ENCODE measurements at regions of chr14 and their contacts with region 1.

Region 1: GRCh38 chr14:93234798-93235197 is 27.7 kb downstream of the UBR7 start:
- DNase-seq: no peak
- H3K4me3 ChIP-seq: no peak overlapping the region
- H3K27ac ChIP-seq: no peak overlapping the region
- H3K4me1 ChIP-seq: no peaks in the 10 kb centered on the region
- CTCF ChIP-seq: no peak

Region 2: DNA sequence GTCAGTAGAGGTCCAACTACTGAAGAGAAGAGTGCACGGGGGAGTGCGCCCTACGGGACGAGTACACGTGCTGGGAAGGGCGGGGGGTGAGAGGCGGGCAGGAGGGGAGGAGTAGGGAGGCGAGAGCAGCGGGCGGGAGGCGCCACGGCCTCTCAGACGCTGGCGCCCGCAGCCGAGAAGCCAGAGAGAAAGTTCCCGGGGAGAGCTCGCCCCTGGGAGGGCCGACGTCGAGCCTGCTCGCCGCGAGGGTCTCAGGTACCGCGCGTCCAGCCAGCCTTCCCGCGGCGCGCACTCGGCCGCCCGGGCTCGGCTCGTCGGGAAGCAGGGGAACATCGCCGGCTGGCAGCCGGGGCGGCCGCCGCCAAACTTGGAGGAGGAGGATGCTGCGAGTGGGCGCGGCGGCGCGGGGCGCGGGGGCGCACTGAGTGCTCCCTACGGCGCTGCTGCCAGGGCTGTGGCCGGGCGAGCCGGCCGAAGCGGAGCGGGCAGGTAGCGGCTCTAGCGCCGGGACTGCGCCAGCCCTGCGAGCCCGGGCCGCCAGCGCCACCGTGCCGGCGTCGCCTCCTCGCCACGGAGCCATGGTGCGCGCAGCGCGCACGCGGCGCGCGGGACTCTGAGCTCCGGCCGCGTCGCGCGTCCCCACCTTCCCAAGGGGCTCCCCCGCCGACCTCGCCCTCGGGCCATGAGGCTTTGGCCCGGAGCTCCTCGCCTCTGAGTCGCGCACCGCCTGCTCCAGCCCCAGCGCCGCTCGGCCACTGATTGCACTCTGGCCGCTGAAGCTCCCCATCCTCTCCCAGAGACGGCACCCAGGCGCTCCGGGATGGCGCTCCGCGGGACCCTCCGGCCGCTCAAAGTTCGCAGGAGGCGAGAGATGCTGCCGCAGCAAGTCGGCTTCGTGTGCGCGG is 911.5 kb before region 1 on chr14 and contains the start of gene SLC24A4:
- CTCF ChIA-PET with region 1: no interaction called
- POLR2A ChIA-PET with region 1: no interaction called
- intact Hi-C with region 1: no loop called
- DNase-seq: no peak
- H3K4me3 ChIP-seq: no peak within 1 kb of the TSS
- H3K27ac ChIP-seq: no peak within 1 kb of the TSS
- H3K4me1 ChIP-seq: no peaks in the 10 kb centered on the region
- CTCF ChIP-seq: no peak
- total RNA-seq, gene SLC24A4: not detected in 2 replicates

Region 3: DNA sequence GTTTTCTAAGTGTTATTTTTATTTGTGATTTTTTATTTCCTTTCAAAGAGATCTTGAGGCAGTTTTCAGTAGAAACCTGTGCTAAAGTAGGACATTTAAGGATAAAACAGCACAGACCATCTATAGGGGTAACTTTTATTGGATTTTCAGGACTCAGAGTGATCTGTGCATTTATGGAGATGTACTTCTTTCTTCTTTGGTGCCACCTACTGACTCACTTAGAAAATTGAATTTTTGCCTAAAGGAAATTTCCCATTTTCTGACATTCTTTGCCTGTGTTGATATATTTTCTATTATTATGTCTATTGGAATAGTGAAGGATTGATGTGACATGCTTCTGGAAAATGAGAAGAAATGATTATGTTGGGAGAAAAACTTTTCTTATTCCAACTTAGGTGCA is 309.0 kb after region 1 on chr14:
- CTCF ChIA-PET with region 1: no interaction called
- POLR2A ChIA-PET with region 1: no interaction called
- intact Hi-C with region 1: loop called (anchors 2 kb)
- DNase-seq: peak; percentile 38
- H3K4me3 ChIP-seq: no peak overlapping the region
- H3K27ac ChIP-seq: no peak overlapping the region
- H3K4me1 ChIP-seq: no peaks in the 10 kb centered on the region
- CTCF ChIP-seq: peak; percentile 78

Region 4: DNA sequence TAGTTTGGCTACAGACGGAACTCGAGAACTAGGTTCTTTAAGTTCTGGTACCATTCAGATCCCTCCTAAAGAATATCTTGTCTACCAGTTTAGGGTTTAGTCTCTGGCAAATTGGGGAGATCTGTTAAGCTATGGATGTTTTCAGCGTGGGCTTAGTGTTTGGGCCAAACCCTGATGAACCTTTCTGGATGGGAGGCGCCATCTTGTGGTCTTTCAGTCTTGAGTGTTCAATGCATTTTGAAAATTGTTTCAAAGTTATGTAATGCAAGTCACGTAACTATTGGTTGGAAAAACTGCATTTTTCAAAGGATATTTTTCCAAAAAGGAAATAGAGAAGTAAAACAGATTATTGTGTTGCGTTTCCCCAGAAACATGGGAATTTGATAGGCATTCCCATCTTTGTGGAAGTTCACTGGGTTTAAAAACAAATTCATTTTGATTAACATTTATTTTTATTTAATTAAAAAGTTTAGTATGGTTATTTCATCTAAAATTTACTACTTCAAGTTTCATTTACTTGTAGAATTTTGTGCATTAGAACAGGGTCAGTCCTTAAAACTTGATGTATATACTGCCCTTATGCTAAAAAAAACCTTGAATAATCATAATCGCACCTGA is 384.5 kb after region 1 on chr14:
- CTCF ChIA-PET with region 1: no interaction called
- POLR2A ChIA-PET with region 1: no interaction called
- intact Hi-C with region 1: loop called (anchors 2 kb)
- DNase-seq: peak; percentile 58
- H3K4me3 ChIP-seq: no peak overlapping the region
- H3K27ac ChIP-seq: no peak overlapping the region
- H3K4me1 ChIP-seq: no peaks in the 10 kb centered on the region
- CTCF ChIP-seq: peak; percentile 94

Measured in OCI-LY7 (cell line).